Heart left ventricle (tissue), 16 donors: ENCODE measurements at regions of chr7 and their contacts with region 1.

Region 1: GRCh38 chr7:108181073-108181985 is 51.2 kb upstream of the LAMB4 start:
- DNase-seq: no peak
- ATAC-seq: peak in 3 of 4 donors; percentile 20 to 45 (median 24)
- H3K4me3 ChIP-seq: no peak overlapping the region
- H3K27ac ChIP-seq: no peak overlapping the region
- H3K4me1 ChIP-seq: no peaks in the 10 kb centered on the region
- H3K27me3 ChIP-seq: peaks cover 0 to 2% (median 0%) of the 10 kb centered on the region in 9 donors
- CTCF ChIP-seq: peak; percentile 68 to 89 (median 82)
- POLR2A ChIP-seq: no peak

Region 2: DNA sequence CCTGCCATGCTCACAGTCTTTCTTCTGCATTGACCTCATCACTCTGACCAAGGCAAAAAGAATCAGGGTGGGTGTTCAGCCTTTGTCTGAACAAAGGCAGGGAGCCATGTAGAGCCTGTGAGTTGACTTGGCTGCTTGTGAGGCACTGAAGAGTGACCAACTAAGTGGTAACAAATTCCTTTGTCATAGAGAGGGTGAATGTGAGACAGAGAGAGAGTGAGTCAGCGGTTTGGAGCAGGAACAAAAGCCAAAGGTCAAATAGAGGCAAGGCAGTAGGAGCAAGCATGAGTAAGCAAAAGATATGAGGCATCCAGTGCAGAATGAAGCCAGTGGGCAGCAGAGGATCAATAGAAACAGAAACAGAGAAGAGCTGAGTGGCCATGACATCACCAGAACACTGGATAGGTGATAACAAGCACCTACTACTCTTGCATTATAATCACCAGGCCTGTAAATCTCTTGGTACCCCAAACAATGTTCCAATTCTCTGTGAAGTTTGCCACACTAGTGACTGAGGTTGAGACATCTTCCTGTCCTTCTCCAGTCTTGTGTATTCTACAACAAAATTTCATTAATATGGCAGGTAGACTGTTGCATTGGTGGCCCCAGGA is 65.0 kb after region 1 on chr7:
- intact Hi-C with region 1: no loop called
- DNase-seq: no peak
- ATAC-seq: peak in 3 of 4 donors; percentile 42 to 69 (median 68)
- H3K4me3 ChIP-seq: no peak overlapping the region
- H3K27ac ChIP-seq: no peak overlapping the region
- H3K4me1 ChIP-seq: peaks cover 0 to 3% (median 0%) of the 10 kb centered on the region in 12 donors
- H3K27me3 ChIP-seq: no peaks in the 10 kb centered on the region
- CTCF ChIP-seq: no peak
- POLR2A ChIP-seq: no peak

Region 3: GRCh38 chr7:108452722-108453121 is 271.4 kb after region 1 on chr7:
- intact Hi-C with region 1: loop called in 4 of 10 experiments (anchors 2 to 10 kb)
- DNase-seq: no peak
- ATAC-seq: no peak
- H3K4me3 ChIP-seq: no peak overlapping the region
- H3K27ac ChIP-seq: no peak overlapping the region
- H3K4me1 ChIP-seq: peaks cover 0 to 25% (median 16%) of the 10 kb centered on the region in 12 donors
- H3K27me3 ChIP-seq: peaks cover 7 to 65% (median 39%) of the 10 kb centered on the region in 9 donors
- CTCF ChIP-seq: peak in 6 of 12 donors; percentile 17 to 46 (median 30)
- POLR2A ChIP-seq: no peak

Region 4: DNA sequence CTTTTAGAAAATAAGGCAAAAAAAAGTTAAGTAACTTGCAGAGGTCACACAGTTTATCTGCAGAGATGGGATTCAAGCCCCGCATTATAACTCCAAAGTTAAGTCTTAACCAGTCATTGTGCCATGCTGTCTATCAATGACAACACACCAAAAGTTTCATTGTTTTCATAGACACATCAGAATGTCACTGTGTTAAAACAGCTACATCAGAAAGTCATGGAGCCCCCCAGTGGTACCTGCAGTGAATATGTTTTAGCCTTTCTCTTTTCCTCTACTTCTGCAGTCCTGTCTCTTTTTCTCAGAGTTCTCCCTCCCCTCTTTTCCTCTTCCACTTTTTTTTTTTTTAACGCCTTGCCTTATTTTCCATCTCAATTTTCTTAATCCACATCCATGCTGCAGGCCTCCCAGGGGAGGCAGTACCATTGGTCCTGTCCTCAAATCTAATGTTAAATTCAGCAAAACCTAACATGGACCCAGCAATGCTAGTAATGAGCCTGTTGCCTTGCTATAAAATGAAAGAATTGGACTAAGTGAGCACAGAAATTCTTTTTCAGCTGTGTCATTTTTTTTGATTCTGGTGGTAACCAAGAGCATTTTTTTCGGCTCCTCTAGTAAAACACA is 278.7 kb after region 1 on chr7:
- intact Hi-C with region 1: loop called in 8 of 10 experiments (anchors 2 to 10 kb)
- DNase-seq: no peak
- ATAC-seq: peak in 1 of 4 donors; percentile 28
- H3K4me3 ChIP-seq: no peak overlapping the region
- H3K27ac ChIP-seq: no peak overlapping the region
- H3K4me1 ChIP-seq: peaks cover 0 to 19% (median 10%) of the 10 kb centered on the region in 12 donors
- H3K27me3 ChIP-seq: peaks cover 0 to 46% (median 20%) of the 10 kb centered on the region in 9 donors
- CTCF ChIP-seq: peak in 7 of 12 donors; percentile 21 to 51 (median 39)
- POLR2A ChIP-seq: no peak

Region 5: DNA sequence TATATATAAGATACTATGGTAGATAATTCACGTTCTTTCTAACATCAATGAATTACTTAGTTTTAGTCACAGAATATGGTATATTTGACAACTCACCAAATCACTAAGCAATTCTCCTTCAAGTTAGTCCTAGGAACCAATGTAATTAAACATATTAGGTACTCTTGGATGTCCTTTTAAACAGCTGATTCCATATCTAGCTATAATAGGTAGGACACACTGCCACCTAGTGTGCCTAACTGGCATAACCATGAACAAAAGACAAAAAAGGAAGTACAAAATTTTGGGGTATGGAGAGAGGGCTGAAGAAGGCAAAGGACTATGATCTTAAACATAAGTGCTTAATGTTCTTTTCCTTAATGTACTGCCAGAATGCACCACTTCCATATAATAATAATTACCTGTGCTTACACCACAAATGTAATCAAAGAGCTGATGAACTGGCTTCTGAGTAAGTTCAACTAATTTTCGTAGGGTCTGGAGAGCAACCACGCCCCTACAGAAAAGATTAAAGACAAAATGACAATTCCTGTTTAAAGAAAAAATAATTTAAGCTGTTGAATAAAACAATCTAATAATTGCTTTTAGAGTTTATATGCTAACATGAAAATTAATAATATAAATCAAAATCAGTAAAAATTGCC is 315.9 kb after region 1 on chr7:
- intact Hi-C with region 1: loop called (anchors 2 to 5 kb)
- DNase-seq: peak in 2 of 5 donors; percentile 12 to 22
- ATAC-seq: peak in 2 of 4 donors; percentile 52 to 61
- H3K4me3 ChIP-seq: no peak overlapping the region
- H3K27ac ChIP-seq: no peak overlapping the region
- H3K4me1 ChIP-seq: no peaks in the 10 kb centered on the region
- H3K27me3 ChIP-seq: no peaks in the 10 kb centered on the region
- CTCF ChIP-seq: peak; percentile 71 to 94 (median 82)
- POLR2A ChIP-seq: no peak

Region 6: DNA sequence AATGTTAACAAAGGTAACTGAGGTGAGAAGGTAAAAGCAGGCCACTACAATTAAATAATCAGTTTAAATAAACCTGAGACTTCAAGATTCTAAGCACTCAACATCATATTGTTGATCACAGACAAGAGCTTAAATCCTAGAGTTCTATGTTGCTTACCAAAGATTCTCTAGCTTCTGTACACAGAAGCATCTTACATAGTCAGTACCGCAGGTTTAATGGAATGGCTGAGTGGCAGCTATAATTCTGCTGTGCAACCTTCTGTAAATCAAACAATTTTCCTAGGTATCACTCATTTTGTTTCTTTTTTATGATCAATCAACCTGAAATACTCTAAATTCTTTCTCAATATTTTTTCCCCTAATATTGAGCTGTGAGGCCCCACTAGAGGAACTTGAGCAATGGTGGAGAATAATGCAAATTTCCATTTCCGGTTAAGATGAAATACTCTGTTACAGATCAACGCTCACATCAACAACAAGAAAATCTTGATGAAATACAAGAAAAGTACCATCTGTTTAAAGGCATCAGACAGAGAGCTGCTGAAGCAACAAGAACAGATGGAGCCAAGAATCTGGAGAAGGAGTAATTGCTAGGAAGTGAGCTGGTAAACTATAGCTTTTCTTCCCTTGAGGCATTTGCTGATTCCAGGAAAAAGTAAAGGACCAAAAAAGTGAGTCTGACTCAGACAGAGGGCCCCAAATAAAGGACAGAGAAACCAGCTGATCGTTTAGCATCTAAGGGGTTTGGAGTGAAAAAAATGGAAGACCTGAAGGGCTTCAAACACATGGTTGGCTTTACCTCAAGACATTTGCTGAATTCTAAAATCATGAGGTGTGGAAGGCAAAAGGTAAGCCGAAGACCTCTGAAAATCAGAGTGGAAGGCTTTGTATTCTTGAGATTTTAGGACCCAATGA is 322.0 kb after region 1 on chr7:
- intact Hi-C with region 1: loop called in 5 of 10 experiments (anchors 5 kb)
- DNase-seq: no peak
- ATAC-seq: peak in 2 of 4 donors; percentile 20 to 69
- H3K4me3 ChIP-seq: no peak overlapping the region
- H3K27ac ChIP-seq: peak overlapping the region in 1 of 12 donors; percentile 7
- H3K4me1 ChIP-seq: peaks cover 0 to 11% (median 0%) of the 10 kb centered on the region in 12 donors
- H3K27me3 ChIP-seq: no peaks in the 10 kb centered on the region
- CTCF ChIP-seq: no peak
- POLR2A ChIP-seq: no peak